ENCODE measurements at regions of chr19 and their contacts with region 1.

Region 1: DNA sequence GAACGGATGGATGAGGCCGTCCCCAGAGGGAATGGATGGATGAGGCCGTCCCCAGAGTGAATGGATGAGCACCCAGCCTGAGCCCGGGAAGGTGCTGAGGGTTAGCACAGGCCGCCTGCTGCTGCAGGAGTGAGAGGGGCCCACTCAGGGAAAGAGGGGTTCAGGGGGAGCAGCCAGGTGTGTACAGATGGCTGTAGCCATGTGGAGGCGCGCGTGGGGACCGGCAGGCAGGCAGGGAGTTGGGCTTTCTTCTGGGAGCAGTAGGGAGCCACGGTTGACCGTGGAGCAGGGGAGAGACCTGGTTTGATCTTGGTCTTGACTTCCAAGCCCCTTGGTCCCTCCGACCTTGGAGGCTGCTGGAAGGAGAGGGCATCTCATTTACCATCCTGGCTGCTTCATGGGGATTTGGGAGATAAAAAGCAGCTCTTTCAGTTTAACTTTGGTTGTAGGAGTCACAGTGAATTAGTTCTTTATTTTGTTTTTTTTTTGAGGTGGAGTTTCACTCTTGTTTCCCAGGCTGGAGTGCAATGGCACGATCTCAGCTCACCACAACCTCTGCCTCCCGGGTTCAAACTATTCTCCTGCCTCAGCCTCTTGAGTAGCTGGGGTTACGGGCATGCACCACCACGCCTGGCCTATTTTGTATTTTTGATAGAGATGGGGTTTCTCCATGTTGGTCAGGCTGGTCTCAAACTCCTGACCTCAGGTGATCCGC is 24.7 kb downstream of the ARID3A start:
- DNase-seq: no peak
- H3K4me3 ChIP-seq: no peak overlapping the region
- H3K27me3 ChIP-seq: no peaks in the 10 kb centered on the region
- CTCF ChIP-seq: no peak

Region 2: DNA sequence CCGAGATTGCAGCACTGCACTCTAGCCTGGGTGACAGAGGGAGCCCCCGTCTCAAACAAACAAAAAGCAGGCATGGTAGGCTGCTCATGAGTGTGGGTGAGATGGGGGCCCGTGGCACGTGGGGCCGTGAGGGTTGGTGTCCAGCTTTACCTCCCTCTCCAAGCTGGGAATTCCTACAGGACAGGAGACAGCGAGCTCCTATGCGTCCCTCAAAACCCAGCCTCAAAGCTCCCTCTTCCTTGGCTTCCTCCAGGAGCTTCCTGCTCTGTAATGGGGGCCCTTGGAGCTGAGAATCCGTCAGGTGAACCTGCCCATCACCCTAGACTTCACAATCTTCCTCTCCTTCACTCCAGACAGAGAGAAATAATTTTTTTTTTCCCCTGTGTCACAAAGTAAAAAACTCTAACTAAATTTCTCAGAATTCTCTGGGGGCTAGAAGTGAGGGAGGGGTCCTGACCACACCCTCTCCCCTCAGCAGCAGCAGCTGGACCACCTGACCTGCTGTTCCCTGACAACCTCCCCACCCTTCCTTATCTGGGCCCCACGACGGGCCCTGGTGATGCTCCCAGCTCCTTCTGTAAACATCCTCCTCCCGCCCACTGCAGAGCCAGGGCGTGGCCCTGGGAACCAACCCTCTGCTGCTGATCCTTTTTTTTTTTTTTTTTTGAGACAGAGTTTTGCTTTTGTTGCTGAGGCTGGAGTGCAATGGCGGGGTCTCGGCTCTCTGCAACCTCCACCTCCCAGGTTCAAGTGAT is 11.5 kb after region 1 on chr19:
- CTCF ChIA-PET with region 1: no interaction called
- POLR2A ChIA-PET with region 1: interaction called, 12 read pairs
- DNase-seq: no peak
- H3K4me3 ChIP-seq: no peak overlapping the region
- H3K27me3 ChIP-seq: no peaks in the 10 kb centered on the region
- CTCF ChIP-seq: no peak

Region 3: DNA sequence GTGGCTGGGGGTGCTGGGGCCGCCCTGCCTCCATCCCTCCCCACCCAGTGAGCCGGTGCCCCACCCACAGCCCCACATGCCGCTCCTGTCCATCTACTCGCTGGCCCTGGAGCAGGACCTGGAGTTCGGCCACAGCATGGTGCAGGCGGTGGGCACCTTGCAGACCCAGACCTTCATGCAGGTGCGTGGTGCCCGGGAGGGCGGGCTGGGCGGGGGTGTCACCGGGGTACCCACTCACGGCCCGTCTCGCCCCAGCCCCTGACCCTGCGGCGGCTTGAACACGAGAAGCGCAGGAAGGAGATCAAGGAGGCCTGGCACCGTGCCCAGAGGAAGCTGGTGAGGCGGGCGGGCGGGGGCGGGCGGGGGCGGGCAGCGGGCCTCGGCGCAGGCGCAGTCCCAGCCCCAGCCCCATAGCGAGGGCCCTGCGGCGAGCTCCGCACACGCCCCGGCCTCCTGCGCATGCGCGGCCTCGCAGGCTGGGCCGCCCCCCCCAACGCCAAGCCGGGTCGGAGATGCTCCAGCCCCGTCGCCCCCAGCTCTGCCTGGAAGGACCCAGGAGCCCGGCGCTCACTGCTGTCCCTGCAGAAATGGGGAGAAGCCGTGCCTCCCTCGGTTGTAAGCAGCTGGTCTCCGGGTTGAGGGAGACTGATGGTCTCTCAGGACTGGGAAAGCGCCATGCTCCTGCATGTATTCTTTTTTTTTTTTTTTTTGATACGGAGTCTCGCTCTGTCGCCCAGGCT is 124.2 kb after region 1 on chr19:
- CTCF ChIA-PET with region 1: no interaction called
- POLR2A ChIA-PET with region 1: no interaction called
- DNase-seq: no peak
- H3K4me3 ChIP-seq: no peak overlapping the region
- H3K27me3 ChIP-seq: peaks cover 6% of the 10 kb centered on the region
- CTCF ChIP-seq: no peak